ENCODE measurements at regions of chr17 and their contacts with region 1.

Region 1: DNA sequence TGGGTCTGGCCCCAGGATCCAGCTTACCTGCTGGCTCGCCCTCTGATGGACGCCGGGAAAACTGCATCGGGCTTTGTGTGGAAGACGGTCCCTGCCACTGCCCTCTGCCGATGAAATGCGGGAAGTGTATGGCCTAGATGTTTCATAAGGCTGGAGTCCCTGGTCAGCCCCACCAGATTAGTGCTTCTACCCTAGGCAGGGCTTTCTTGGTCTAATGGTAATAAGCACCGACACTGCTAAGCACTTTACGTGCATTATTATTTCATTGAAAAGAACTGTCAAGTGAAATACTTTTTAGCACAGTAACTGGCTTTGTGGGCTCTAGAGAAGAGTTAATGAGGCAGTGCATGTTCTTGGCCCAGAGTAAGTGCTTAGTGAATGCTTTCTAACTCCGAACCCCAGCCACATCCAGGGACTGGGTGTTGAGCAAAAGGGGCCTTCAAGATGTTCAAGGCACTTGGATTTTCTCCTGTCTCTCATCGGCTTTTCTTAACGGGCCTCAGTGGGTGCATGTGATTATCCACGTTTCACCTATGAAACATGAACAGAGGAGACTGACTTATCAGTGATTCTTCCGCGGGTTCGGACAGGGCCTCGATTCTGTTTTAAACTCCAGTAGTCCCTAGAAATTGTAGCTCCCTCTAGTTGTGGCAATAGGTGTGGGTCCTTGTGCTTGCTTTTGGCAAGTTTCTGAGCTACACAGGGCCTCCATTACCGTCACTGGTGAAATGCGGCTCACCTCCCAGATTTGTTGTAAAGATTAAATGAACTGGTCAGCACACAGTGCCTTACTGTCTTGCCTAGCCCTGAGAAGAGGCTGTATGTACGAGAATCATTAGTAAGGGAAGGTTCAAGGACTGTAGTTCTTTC is 6.6 kb downstream of the TRAF4 start:
- DNase-seq: peak; percentile 82
- ATAC-seq: peak; percentile 84
- H3K4me3 Mint-ChIP-seq: peak overlapping the region; percentile 75
- H3K27ac Mint-ChIP-seq: peak overlapping the region; percentile 74
- H3K4me1 Mint-ChIP-seq: peaks cover 51% of the 10 kb centered on the region
- H3K27me3 Mint-ChIP-seq: no peaks in the 10 kb centered on the region
- CTCF ChIP-seq: peak; percentile 95

Region 2: GRCh38 chr17:28313841-28314240 is 436.6 kb before region 1 on chr17:
- CTCF ChIA-PET with region 1: no interaction called
- POLR2A ChIA-PET with region 1: no interaction called
- intact Hi-C with region 1: no loop called
- DNase-seq: no peak
- ATAC-seq: no peak
- H3K4me3 Mint-ChIP-seq: no peak overlapping the region
- H3K27ac Mint-ChIP-seq: no peak overlapping the region
- H3K4me1 Mint-ChIP-seq: peaks cover 12% of the 10 kb centered on the region
- H3K27me3 Mint-ChIP-seq: no peaks in the 10 kb centered on the region
- CTCF ChIP-seq: no peak

Region 3: GRCh38 chr17:28655160-28655840 is 95.1 kb before region 1 on chr17:
- CTCF ChIA-PET with region 1: no interaction called
- POLR2A ChIA-PET with region 1: no interaction called
- intact Hi-C with region 1: no loop called
- DNase-seq: no peak
- ATAC-seq: no peak
- H3K4me3 Mint-ChIP-seq: no peak overlapping the region
- H3K27ac Mint-ChIP-seq: no peak overlapping the region
- H3K4me1 Mint-ChIP-seq: peaks cover 6% of the 10 kb centered on the region
- H3K27me3 Mint-ChIP-seq: no peaks in the 10 kb centered on the region
- CTCF ChIP-seq: no peak

Region 4: GRCh38 chr17:28737859-28738679 is 12.3 kb before region 1 on chr17:
- CTCF ChIA-PET with region 1: interaction called, 7 read pairs
- POLR2A ChIA-PET with region 1: interaction called, 2,384 read pairs
- intact Hi-C with region 1: loop called (anchors 1 kb)
- DNase-seq: peak; percentile 75
- ATAC-seq: peak; percentile 71
- H3K4me3 Mint-ChIP-seq: peak overlapping the region; percentile 80
- H3K27ac Mint-ChIP-seq: peak overlapping the region; percentile 99
- H3K4me1 Mint-ChIP-seq: peaks cover 97% of the 10 kb centered on the region
- H3K27me3 Mint-ChIP-seq: no peaks in the 10 kb centered on the region
- CTCF ChIP-seq: no peak

Region 5: GRCh38 chr17:28889996-28890395 is 139.6 kb after region 1 on chr17:
- CTCF ChIA-PET with region 1: interaction called, 5 read pairs
- POLR2A ChIA-PET with region 1: interaction called, 14 read pairs
- intact Hi-C with region 1: no loop called
- DNase-seq: no peak
- ATAC-seq: no peak
- H3K4me3 Mint-ChIP-seq: peak overlapping the region; percentile 35
- H3K27ac Mint-ChIP-seq: peak overlapping the region; percentile 65
- H3K4me1 Mint-ChIP-seq: peaks cover 86% of the 10 kb centered on the region
- H3K27me3 Mint-ChIP-seq: no peaks in the 10 kb centered on the region
- CTCF ChIP-seq: no peak

Region 6: GRCh38 chr17:29005936-29006511 is 255.6 kb after region 1 on chr17 and contains the start of gene SEZ6:
- CTCF ChIA-PET with region 1: no interaction called
- POLR2A ChIA-PET with region 1: no interaction called
- intact Hi-C with region 1: no loop called
- DNase-seq: peak; percentile 52
- ATAC-seq: peak; percentile 61
- H3K4me3 Mint-ChIP-seq: no peak within 1 kb of the TSS
- H3K27ac Mint-ChIP-seq: no peak within 1 kb of the TSS
- H3K4me1 Mint-ChIP-seq: peaks cover 2% of the 10 kb centered on the region
- H3K27me3 Mint-ChIP-seq: peaks cover 62% of the 10 kb centered on the region
- CTCF ChIP-seq: no peak
- total RNA-seq, gene SEZ6: not detected in 2 replicates